Activated CD4-positive, alpha-beta T cell treated with anti-CD3 and anti-CD28 coated beads for 36 hours (primary cell): ENCODE measurements at regions of chr14 and their contacts with region 1.

Region 1: GRCh38 chr14:73644531-73645247 is at the start of gene DNAL1:
- DNase-seq: peak; percentile 95
- ATAC-seq: peak; percentile 100
- H3K4me3 Mint-ChIP-seq: peak within 1 kb of the TSS; percentile 98
- H3K27ac Mint-ChIP-seq: peak within 1 kb of the TSS; percentile 91
- H3K4me1 Mint-ChIP-seq: peaks cover 16% of the 10 kb centered on the region
- H3K27me3 Mint-ChIP-seq: no peaks in the 10 kb centered on the region
- total RNA-seq, gene DNAL1: 3.7 to 6.8 TPM

Region 2: GRCh38 chr14:73026845-73027542 is 617.7 kb before region 1 on chr14 and contains the start of gene ZFYVE1:
- CTCF ChIA-PET with region 1: no interaction called
- POLR2A ChIA-PET with region 1: no interaction called
- intact Hi-C with region 1: loop called in 1 of 2 experiments (anchors 1 kb)
- DNase-seq: peak; percentile 96
- ATAC-seq: peak; percentile 100
- H3K4me3 Mint-ChIP-seq: peak within 1 kb of the TSS; percentile 84
- H3K27ac Mint-ChIP-seq: peak within 1 kb of the TSS; percentile 87
- H3K4me1 Mint-ChIP-seq: peaks cover 35% of the 10 kb centered on the region
- H3K27me3 Mint-ChIP-seq: no peaks in the 10 kb centered on the region
- total RNA-seq, gene ZFYVE1: 8.3 to 9.4 TPM

Region 3: DNA sequence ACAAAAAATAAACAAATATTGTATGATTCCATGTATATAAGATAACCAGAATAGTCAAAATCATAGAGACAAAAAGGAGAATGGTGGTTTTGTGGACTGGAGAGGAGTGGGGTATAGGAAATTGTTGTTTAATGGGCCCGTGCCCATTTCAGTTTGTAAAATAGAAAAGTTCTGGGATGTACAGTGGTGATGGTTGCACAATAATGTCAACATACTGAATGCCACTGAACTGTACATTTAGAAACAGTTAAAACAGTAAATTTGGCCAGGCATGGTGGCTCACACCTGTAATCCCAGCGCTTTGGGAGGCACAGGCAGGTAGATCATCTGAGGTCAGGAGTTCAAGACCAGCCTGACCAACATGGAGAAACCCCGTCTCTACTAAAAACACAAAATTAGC is 226.5 kb before region 1 on chr14:
- CTCF ChIA-PET with region 1: no interaction called
- POLR2A ChIA-PET with region 1: no interaction called
- intact Hi-C with region 1: no loop called
- DNase-seq: no peak
- ATAC-seq: no peak
- H3K4me3 Mint-ChIP-seq: no peak overlapping the region
- H3K27ac Mint-ChIP-seq: no peak overlapping the region
- H3K4me1 Mint-ChIP-seq: peaks cover 5% of the 10 kb centered on the region
- H3K27me3 Mint-ChIP-seq: no peaks in the 10 kb centered on the region

Region 4: GRCh38 chr14:73655851-73656250 is 11.2 kb after region 1 on chr14:
- CTCF ChIA-PET with region 1: no interaction called
- POLR2A ChIA-PET with region 1: no interaction called
- intact Hi-C with region 1: no loop called
- DNase-seq: no peak
- ATAC-seq: no peak
- H3K4me3 Mint-ChIP-seq: no peak overlapping the region
- H3K27ac Mint-ChIP-seq: no peak overlapping the region
- H3K4me1 Mint-ChIP-seq: no peaks in the 10 kb centered on the region
- H3K27me3 Mint-ChIP-seq: no peaks in the 10 kb centered on the region

Region 5: GRCh38 chr14:73696466-73697400 is 52.0 kb after region 1 on chr14:
- CTCF ChIA-PET with region 1: no interaction called
- POLR2A ChIA-PET with region 1: no interaction called
- intact Hi-C with region 1: loop called in 1 of 2 experiments (anchors 5 kb)
- DNase-seq: no peak
- ATAC-seq: peak; percentile 87
- H3K4me3 Mint-ChIP-seq: peak overlapping the region; percentile 46
- H3K27ac Mint-ChIP-seq: peak overlapping the region; percentile 92
- H3K4me1 Mint-ChIP-seq: peaks cover 50% of the 10 kb centered on the region
- H3K27me3 Mint-ChIP-seq: no peaks in the 10 kb centered on the region

Region 6: GRCh38 chr14:73713803-73714655 is 69.3 kb after region 1 on chr14 and contains the start of gene PNMA1:
- CTCF ChIA-PET with region 1: no interaction called
- POLR2A ChIA-PET with region 1: no interaction called
- intact Hi-C with region 1: loop called (anchors 1 to 2 kb)
- DNase-seq: peak; percentile 92
- ATAC-seq: peak; percentile 79
- H3K4me3 Mint-ChIP-seq: peak within 1 kb of the TSS; percentile 98
- H3K27ac Mint-ChIP-seq: peak within 1 kb of the TSS; percentile 94
- H3K4me1 Mint-ChIP-seq: peaks cover 13% of the 10 kb centered on the region
- H3K27me3 Mint-ChIP-seq: no peaks in the 10 kb centered on the region
- total RNA-seq, gene PNMA1: 23.2 to 28.8 TPM

Region 7: GRCh38 chr14:74018586-74019407 is 374.1 kb after region 1 on chr14 and contains the starts of genes BBOF1 and ENTPD5:
- CTCF ChIA-PET with region 1: no interaction called
- POLR2A ChIA-PET with region 1: no interaction called
- intact Hi-C with region 1: loop called in 1 of 2 experiments (anchors 5 kb)
- DNase-seq: peak; percentile 90
- ATAC-seq: peak; percentile 93
- H3K4me3 Mint-ChIP-seq: peak within 1 kb of the TSS; percentile 80
- H3K27ac Mint-ChIP-seq: peak within 1 kb of the TSS; percentile 93
- H3K4me1 Mint-ChIP-seq: peaks cover 12% of the 10 kb centered on the region
- H3K27me3 Mint-ChIP-seq: no peaks in the 10 kb centered on the region
- total RNA-seq, gene BBOF1: 1.9 to 2.1 TPM
- total RNA-seq, gene ENTPD5: 8.7 to 10.0 TPM

Region 8: GRCh38 chr14:75176142-75176820 is 1531.6 kb after region 1 on chr14 and contains the start of gene TMED10:
- CTCF ChIA-PET with region 1: no interaction called
- POLR2A ChIA-PET with region 1: no interaction called
- intact Hi-C with region 1: no loop called
- DNase-seq: peak; percentile 95
- ATAC-seq: peak; percentile 81
- H3K4me3 Mint-ChIP-seq: peak within 1 kb of the TSS; percentile 94
- H3K27ac Mint-ChIP-seq: peak within 1 kb of the TSS; percentile 95
- H3K4me1 Mint-ChIP-seq: peaks cover 39% of the 10 kb centered on the region
- H3K27me3 Mint-ChIP-seq: no peaks in the 10 kb centered on the region
- total RNA-seq, gene TMED10: 179 to 253 TPM